Heart right ventricle (tissue), 16 donors: ENCODE measurements at regions of chr17 and their contacts with region 1.

Region 1: DNA sequence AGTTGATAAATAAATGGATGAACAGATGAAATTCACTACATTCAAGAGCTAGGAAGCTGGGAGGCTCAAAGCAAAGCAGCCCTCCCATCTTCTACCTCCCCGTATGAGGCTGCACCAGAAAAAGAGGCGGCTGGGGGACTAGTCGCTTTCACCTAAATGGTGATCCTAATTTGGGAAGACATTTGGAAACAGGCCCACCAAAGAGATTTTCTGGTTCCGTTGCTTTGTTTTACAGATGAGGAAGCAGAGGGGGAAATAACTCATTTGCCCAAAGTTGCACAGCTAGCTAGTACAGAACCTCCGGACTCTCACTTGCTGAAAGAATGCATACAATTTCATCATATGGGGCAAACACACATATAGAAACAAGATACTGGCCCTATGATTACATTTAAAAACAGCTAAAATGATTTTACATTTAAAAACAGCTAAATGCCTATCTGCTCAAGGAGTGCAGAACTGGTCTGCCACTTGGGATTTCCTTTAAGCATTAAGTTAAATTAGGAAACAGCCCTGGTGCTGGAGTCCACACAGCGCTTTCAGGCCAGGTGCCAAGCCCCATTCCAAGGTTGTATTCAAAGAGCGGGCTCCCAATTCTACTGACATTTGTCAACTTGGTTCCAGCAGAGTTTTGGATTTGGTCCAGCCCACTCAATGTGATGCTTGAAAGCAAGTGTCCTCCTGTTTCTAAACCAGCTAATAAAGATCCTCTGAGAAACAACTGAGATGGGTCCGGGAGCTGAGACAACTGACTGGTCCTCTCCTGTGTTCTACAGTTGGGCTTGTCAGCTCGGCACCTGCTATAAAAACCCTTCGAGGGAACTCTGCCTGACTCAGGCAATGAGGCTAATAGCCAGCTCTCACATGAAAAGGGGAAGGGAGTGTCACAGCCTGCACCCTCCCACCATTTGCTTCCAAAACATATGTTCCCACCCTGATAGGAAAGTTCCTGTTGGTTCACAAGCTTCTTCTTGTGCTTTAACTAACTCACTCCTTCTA is 11.7 kb downstream of the ERN1 start:
- DNase-seq: peak; percentile 44 to 48
- ATAC-seq: peak; percentile 44 to 86 (median 72)
- H3K4me3 ChIP-seq: no peak overlapping the region
- H3K27ac ChIP-seq: peak overlapping the region in 7 of 10 donors; percentile 2 to 61 (median 28)
- H3K4me1 ChIP-seq: peaks cover 5 to 68% (median 27%) of the 10 kb centered on the region in 9 donors
- H3K27me3 ChIP-seq: no peaks in the 10 kb centered on the region
- CTCF ChIP-seq: no peak

Region 2: GRCh38 chr17:64063766-64064224 is 54.5 kb before region 1 on chr17:
- intact Hi-C with region 1: loop called in 1 of 10 experiments (anchors 10 kb)
- DNase-seq: peak; percentile 43 to 62
- ATAC-seq: peak; percentile 47 to 84 (median 74)
- H3K4me3 ChIP-seq: no peak overlapping the region
- H3K27ac ChIP-seq: peak overlapping the region in 1 of 10 donors; percentile 74
- H3K4me1 ChIP-seq: peaks cover 0 to 45% (median 0%) of the 10 kb centered on the region in 9 donors
- H3K27me3 ChIP-seq: no peaks in the 10 kb centered on the region
- CTCF ChIP-seq: peak; percentile 29 to 69 (median 54)

Region 3: DNA sequence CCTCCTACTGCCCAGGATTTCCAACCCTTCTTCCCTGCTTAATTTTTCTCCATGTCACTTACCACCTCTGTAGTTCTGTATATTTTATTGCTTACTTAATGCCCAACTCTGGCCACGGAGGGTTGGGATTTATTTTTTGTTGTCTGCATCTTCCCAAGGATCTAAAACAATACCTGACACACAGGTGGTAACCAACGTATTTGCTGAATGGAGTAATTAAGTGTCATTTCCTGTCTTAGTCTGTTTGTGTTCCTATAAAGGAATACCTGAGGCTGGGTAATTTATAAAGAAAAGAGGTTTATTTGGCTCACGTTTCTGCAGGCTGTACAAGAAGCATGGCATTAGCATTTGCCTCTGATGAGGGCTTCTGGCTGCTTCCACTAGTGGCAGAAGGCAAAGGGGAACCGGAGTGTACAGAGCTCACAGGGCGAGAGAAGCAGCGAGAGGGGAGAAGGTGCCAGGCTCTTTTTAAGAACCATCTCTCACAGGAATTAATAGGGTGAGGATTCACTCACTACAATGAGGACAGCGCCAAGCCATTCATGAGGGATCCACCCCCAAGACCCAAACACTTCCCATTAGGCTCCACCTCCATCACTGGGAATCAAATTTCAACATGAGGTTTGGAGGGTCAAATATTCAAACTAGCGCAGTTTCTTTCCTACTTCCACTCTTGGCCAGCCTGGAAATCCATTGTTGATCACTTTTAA is 33.2 kb before region 1 on chr17:
- intact Hi-C with region 1: loop called in 1 of 10 experiments (anchors 5 kb)
- DNase-seq: no peak
- ATAC-seq: peak in 1 of 8 donors; percentile 7
- H3K4me3 ChIP-seq: no peak overlapping the region
- H3K27ac ChIP-seq: peak overlapping the region in 3 of 10 donors; percentile 18 to 34 (median 26)
- H3K4me1 ChIP-seq: peaks cover 3 to 54% (median 19%) of the 10 kb centered on the region in 9 donors
- H3K27me3 ChIP-seq: no peaks in the 10 kb centered on the region
- CTCF ChIP-seq: no peak